Calu3 (cell line): ENCODE measurements at regions of chr1 and their contacts with region 1.

Region 1: DNA sequence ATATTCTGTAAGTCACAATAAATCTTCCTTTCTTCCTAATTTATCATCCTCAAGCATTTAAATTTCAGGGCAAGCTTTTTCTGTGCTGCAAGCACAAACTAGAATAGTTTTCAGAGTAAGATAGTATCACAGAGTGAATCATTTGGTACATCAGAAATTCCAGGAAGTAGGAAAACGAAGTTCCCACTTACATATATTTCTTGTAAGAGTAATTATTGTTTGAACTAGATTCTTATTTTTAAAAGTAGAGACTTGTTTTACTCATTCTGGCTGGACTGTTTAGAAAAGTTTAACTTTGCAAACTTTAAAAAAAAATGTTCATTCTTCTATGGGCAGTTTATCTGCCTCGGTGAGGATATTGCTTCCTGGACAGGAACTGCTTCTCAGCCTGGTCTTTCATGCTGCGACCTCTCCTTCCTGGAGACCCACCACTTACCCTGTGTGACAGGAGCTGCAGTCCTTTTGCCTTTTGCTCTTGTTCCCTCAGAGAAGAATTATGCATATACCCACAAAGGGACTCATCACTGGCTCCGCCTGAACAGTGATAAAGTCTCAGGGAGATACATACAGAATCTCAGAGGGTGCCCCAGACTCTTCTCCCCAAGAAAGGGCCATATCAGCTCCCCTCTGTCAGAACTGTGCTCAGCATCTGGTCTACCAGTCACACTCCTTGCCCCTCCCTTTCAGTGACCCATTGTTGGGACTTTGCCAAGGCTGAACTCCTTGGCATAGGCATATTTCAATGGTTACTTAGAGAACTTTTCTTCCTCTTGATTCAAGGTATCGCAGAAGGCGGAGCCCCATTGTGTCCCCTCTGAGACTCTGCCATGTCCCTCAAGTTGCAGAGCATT is 102.7 kb upstream of the CD55 start:
- DNase-seq: peak; percentile 76
- H3K4me3 Mint-ChIP-seq: peak overlapping the region; percentile 20
- H3K27ac Mint-ChIP-seq: peak overlapping the region; percentile 67
- H3K4me1 Mint-ChIP-seq: peaks cover 45% of the 10 kb centered on the region
- H3K27me3 Mint-ChIP-seq: no peaks in the 10 kb centered on the region
- CTCF ChIP-seq: no peak

Region 2: DNA sequence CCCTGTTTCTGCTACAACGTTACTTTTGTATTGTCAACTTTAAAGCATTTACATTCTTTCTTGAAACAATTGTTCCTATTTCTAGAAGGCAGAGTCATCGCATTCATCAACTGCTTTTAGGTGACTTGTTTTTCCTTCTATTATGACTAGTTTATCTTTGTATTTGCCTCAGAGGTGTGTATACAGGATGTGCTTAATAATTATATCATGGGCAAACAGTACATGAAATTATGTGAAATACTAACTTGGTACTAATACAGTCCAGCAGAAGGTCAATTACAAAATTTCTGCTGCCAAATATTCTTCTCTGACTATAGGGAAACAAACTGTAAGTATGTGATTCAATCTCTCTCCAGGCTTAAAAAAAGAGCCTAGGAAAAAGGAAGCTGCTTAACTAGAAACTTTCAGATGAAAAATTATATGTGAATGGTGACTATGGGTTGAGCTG is 13.1 kb before region 1 on chr1:
- CTCF ChIA-PET with region 1: interaction called, 7 read pairs
- intact Hi-C with region 1: loop called (anchors 2 kb)
- DNase-seq: no peak
- H3K4me3 Mint-ChIP-seq: peak overlapping the region; percentile 36
- H3K27ac Mint-ChIP-seq: peak overlapping the region; percentile 87
- H3K4me1 Mint-ChIP-seq: peaks cover 17% of the 10 kb centered on the region
- H3K27me3 Mint-ChIP-seq: no peaks in the 10 kb centered on the region
- CTCF ChIP-seq: no peak

Region 3: DNA sequence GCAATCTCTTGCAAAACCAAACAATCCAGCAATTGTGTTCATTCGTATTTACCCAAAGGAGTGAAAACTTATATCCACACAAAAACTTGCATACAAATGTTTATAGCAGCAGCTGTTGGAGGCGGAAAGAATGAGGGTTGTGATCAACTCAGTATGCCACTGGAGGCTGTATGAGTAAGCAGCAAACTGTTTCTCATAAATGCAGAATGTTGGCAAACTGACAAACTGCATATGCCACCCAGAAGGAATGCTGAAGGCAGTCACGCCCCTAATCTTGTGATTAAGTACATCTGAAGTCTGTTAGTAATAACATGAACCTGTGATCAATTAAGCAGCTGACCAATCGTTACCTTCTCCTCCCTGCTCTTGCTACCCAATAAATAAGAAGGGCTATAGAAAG is 174.9 kb after region 1 on chr1:
- CTCF ChIA-PET with region 1: no interaction called
- intact Hi-C with region 1: no loop called
- DNase-seq: peak; percentile 83
- H3K4me3 Mint-ChIP-seq: peak overlapping the region; percentile 58
- H3K27ac Mint-ChIP-seq: peak overlapping the region; percentile 85
- H3K4me1 Mint-ChIP-seq: peaks cover 60% of the 10 kb centered on the region
- H3K27me3 Mint-ChIP-seq: no peaks in the 10 kb centered on the region
- CTCF ChIP-seq: no peak